Panc1 (cell line): ENCODE measurements at regions of chr4 and their contacts with region 1.

Region 1: GRCh38 chr4:159639671-159640323 is 536.9 kb downstream of the RAPGEF2 start:
- DNase-seq: no peak
- ATAC-seq: no peak
- H3K4me3 ChIP-seq: no peak overlapping the region
- H3K27ac ChIP-seq: no peak overlapping the region
- H3K4me1 ChIP-seq: no peaks in the 10 kb centered on the region
- H3K27me3 ChIP-seq: no peaks in the 10 kb centered on the region
- CTCF ChIP-seq: no peak

Region 2: GRCh38 chr4:159526172-159526571 is 113.6 kb before region 1 on chr4:
- CTCF ChIA-PET with region 1: no interaction called
- POLR2A ChIA-PET with region 1: no interaction called
- in situ Hi-C with region 1: no loop called
- intact Hi-C with region 1: no loop called
- DNase-seq: no peak
- ATAC-seq: no peak
- H3K4me3 ChIP-seq: no peak overlapping the region
- H3K27ac ChIP-seq: no peak overlapping the region
- H3K4me1 ChIP-seq: no peaks in the 10 kb centered on the region
- H3K27me3 ChIP-seq: no peaks in the 10 kb centered on the region
- CTCF ChIP-seq: no peak

Region 3: DNA sequence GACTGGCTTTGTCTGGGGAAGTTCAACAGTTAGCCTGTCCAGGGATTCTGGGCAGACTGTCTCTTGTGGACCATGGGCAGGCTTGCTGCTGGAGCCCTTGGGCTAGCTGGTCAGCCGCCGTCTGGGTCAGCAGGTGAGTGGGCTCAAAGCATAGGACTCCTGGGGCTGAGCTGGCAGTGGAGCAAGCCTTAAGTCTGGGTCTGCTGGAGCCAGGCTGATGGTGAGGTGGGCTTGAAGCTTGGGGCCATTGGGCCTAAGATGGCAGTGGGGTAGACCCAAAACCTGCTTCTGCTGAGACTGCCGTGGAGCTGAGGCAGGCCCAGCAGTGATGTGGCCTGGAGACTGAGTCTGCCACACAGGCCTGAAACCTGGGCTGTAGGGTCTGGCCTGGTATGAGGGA is 108.2 kb after region 1 on chr4:
- CTCF ChIA-PET with region 1: no interaction called
- POLR2A ChIA-PET with region 1: no interaction called
- in situ Hi-C with region 1: no loop called
- intact Hi-C with region 1: loop called (anchors 10 kb)
- DNase-seq: no peak
- ATAC-seq: no peak
- H3K4me3 ChIP-seq: no peak overlapping the region
- H3K27ac ChIP-seq: no peak overlapping the region
- H3K4me1 ChIP-seq: no peaks in the 10 kb centered on the region
- H3K27me3 ChIP-seq: no peaks in the 10 kb centered on the region
- CTCF ChIP-seq: no peak

Region 4: DNA sequence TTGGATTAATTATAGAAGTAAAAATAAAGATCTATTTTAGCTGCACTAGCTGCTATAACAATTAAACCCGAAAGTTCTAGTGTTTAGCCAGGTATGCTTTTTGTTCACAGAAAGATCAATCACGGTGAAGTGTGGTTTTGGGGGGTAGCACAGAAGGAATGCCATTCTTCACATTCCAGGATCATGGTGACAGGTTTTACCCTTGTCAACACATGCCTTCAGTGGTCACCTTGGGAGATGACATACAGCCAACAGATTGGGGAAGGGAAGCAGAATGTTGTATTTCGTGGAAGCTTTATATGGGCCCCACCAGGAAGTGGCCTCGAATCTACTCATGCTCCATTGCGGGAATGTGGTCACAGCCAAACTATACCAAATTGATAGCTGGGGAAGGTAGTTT is 216.7 kb after region 1 on chr4:
- CTCF ChIA-PET with region 1: no interaction called
- POLR2A ChIA-PET with region 1: no interaction called
- in situ Hi-C with region 1: no loop called
- intact Hi-C with region 1: no loop called
- DNase-seq: no peak
- ATAC-seq: no peak
- H3K4me3 ChIP-seq: no peak overlapping the region
- H3K27ac ChIP-seq: no peak overlapping the region
- H3K4me1 ChIP-seq: no peaks in the 10 kb centered on the region
- H3K27me3 ChIP-seq: no peaks in the 10 kb centered on the region
- CTCF ChIP-seq: no peak